Mammary epithelial cell (primary cell): ENCODE measurements at regions of chrX and their contacts with region 1.

Region 1: GRCh38 chrX:44025555-44025954 is 52.4 kb upstream of the NDP start:
- DNase-seq: no peak
- H3K4me3 ChIP-seq: no peak overlapping the region
- H3K27ac ChIP-seq: no peak overlapping the region
- H3K4me1 ChIP-seq: no peaks in the 10 kb centered on the region
- H3K27me3 ChIP-seq: no peaks in the 10 kb centered on the region
- CTCF ChIP-seq: no peak

Region 2: GRCh38 chrX:43969504-43970501 is 55.8 kb before region 1 on chrX:
- CTCF ChIA-PET with region 1: no interaction called
- dilution Hi-C with region 1: no loop called
- in situ Hi-C with region 1: loop called in 1 of 2 experiments (anchors 10 kb)
- intact Hi-C with region 1: no loop called
- DNase-seq: no peak
- H3K4me3 ChIP-seq: no peak overlapping the region
- H3K27ac ChIP-seq: no peak overlapping the region
- H3K4me1 ChIP-seq: peaks cover 22% of the 10 kb centered on the region
- H3K27me3 ChIP-seq: no peaks in the 10 kb centered on the region
- CTCF ChIP-seq: no peak

Region 3: GRCh38 chrX:44003975-44004374 is 21.6 kb before region 1 on chrX:
- CTCF ChIA-PET with region 1: no interaction called
- dilution Hi-C with region 1: no loop called
- in situ Hi-C with region 1: no loop called
- intact Hi-C with region 1: no loop called
- DNase-seq: peak; percentile 42
- H3K4me3 ChIP-seq: no peak overlapping the region
- H3K27ac ChIP-seq: no peak overlapping the region
- H3K4me1 ChIP-seq: no peaks in the 10 kb centered on the region
- H3K27me3 ChIP-seq: no peaks in the 10 kb centered on the region
- CTCF ChIP-seq: no peak

Region 4: GRCh38 chrX:44451056-44451455 is 425.5 kb after region 1 on chrX:
- CTCF ChIA-PET with region 1: interaction called, 10 read pairs
- dilution Hi-C with region 1: no loop called
- in situ Hi-C with region 1: no loop called
- intact Hi-C with region 1: no loop called
- DNase-seq: no peak
- H3K4me3 ChIP-seq: no peak overlapping the region
- H3K27ac ChIP-seq: no peak overlapping the region
- H3K4me1 ChIP-seq: no peaks in the 10 kb centered on the region
- H3K27me3 ChIP-seq: peaks cover 3% of the 10 kb centered on the region
- CTCF ChIP-seq: no peak